Esophagus muscularis mucosa (tissue), 4 donors: ENCODE measurements at regions of chr11 and their contacts with region 1.

Region 1: DNA sequence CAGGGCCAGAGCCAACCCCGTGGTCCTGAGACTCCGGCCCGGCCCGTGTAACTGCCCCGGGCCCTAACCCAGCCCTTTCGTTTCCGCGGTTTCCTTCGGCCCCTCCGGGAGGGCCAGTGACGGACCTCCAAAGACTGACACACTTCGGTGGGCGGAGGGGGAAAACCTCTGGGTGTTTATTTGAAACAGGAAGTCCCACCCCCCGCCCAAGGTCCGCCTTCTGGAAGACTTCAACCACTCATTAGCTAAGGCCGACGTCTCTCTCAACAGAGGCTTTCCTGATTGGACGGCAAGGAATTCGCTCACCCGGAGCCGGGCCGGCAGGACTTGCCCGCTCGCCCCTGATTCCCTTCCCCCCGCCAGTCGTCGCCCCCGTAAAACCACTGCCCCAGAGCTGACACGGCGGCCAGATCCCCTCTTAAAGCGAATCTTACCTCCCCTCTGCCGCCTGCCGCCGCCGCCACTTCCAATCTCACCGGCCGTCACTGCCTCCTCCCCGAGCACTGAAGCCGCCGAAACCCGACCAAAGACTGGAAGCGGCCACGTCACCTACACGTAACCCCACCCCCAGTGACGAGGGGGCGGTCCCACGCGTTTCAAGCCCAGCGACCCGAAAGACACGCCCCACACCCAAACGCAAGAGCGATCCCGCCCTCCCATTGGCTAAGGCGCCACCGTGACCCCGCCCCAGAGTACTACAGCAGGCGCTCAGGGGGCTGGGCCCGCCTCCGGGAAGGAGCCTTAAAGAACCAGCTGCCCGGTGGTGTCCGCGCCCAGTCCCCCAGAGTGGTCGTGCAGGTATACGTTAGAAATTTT is at the start of gene STX5:
- DNase-seq: peak; percentile 100
- H3K4me3 ChIP-seq: peak within 1 kb of the TSS; percentile 89 to 98 (median 94)
- H3K27ac ChIP-seq: peak within 1 kb of the TSS; percentile 95 to 99 (median 97)
- H3K4me1 ChIP-seq: peaks cover 42 to 64% (median 51%) of the 10 kb centered on the region in 4 donors
- H3K27me3 ChIP-seq: no peaks in the 10 kb centered on the region
- CTCF ChIP-seq: no peak
- EP300 ChIP-seq: no peak
- POLR2A ChIP-seq: peak; percentile 81
- total RNA-seq, gene STX5: 22.8 to 31.6 (median 31.6) TPM

Region 2: DNA sequence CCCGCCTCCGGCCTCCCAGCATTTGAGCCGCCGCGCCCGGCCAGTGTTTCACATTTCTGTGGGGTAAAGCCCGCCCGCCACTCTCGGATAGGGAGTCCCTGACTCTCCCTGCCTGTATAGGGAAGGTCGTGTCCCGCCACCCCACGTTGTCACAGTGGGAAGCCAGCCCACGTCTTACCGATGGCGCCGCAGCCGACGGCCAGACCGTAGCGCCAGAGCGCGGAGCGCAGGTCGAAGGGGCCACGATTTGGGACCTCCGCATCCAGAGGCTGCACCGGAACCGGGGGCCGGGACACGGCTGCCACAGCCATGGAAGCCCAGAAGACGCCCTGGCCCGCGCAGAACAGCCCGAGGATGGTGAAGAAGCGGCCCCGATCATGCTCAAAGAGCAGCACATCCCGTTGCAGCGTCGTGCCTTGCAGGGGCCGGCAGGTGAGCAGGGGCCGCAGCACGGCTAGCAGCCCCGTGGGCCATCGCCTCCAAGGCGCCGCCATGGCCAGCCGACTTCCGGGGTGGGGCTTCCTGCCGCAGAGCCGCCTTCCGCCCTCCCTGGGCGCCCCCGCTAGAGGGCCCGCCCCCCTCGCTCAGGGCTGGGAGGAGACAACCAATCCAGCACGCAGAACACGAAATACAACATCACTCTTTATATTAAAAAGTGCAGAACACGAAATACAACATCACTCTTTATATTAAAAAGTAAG is 40.1 kb before region 1 on chr11 and contains the start of gene TMEM223:
- intact Hi-C with region 1: loop called (anchors 5 kb)
- DNase-seq: peak; percentile 95
- H3K4me3 ChIP-seq: peak within 1 kb of the TSS; percentile 69 to 87 (median 86)
- H3K27ac ChIP-seq: peak within 1 kb of the TSS; percentile 84 to 91 (median 86)
- H3K4me1 ChIP-seq: peaks cover 38 to 51% (median 49%) of the 10 kb centered on the region in 4 donors
- H3K27me3 ChIP-seq: no peaks in the 10 kb centered on the region
- CTCF ChIP-seq: peak in 2 of 3 experiments; percentile 9 to 35
- EP300 ChIP-seq: no peak
- POLR2A ChIP-seq: peak; percentile 42
- total RNA-seq, gene TMEM223: 13.7 to 17.9 (median 15.8) TPM

Region 3: DNA sequence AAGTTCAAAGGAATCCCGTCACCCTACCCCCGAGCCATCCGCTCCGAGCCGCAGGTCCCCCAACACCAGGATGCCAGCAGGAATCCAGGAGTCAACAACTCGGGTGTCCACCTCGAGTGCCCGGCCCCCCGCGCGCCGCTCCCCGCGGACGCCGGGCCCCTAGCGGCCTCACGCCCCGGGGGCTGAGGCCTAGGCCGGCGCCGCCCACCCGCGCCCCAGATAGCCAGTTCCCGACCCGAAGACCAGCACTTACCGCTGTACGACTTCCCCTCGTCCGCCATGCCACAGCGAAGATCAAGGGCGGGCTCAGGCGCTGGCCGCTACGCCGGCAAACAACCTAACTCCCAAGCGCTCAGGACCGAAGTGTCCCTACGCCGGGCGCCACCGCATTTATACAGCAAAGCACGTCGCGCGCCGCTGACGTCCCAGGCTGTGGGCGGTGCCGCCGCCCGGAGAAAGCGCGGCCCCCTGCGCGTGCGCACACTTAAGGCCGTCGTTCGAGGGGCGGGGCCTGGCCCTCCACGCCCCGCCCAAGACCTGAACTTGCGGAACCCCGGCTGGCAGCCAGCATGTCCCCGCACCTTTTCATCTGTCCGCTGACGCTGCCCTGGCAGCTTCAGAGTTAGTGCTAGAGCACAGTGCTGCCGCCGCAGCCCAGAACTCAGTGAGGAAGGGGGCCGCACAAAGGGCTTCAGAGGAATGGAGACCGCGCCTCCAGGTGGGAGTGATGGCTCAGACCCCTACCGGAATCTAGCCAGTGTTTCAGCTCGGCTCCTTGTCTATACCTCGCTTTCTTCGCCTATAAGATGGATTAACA is 26.4 kb before region 1 on chr11 and contains the start of gene NXF1:
- intact Hi-C with region 1: loop called (anchors 2 kb)
- DNase-seq: peak; percentile 99
- H3K4me3 ChIP-seq: peak within 1 kb of the TSS; percentile 83 to 99 (median 94)
- H3K27ac ChIP-seq: peak within 1 kb of the TSS; percentile 94 to 98 (median 95)
- H3K4me1 ChIP-seq: peaks cover 29 to 44% (median 32%) of the 10 kb centered on the region in 4 donors
- H3K27me3 ChIP-seq: no peaks in the 10 kb centered on the region
- CTCF ChIP-seq: peak in 2 of 3 experiments; percentile 3 to 37
- EP300 ChIP-seq: no peak
- POLR2A ChIP-seq: peak; percentile 99
- total RNA-seq, gene NXF1: 38.6 to 86.4 (median 48.4) TPM

Region 4: GRCh38 chr11:62896049-62896448 is 64.3 kb after region 1 on chr11:
- intact Hi-C with region 1: no loop called
- DNase-seq: no peak
- H3K4me3 ChIP-seq: no peak overlapping the region
- H3K27ac ChIP-seq: peak overlapping the region in 1 of 4 donors; percentile 54
- H3K4me1 ChIP-seq: peaks cover 0 to 6% (median under 1%) of the 10 kb centered on the region in 4 donors
- H3K27me3 ChIP-seq: no peaks in the 10 kb centered on the region
- CTCF ChIP-seq: no peak
- EP300 ChIP-seq: no peak
- POLR2A ChIP-seq: no peak

Region 5: GRCh38 chr11:63553741-63554151 is 722.0 kb after region 1 on chr11:
- intact Hi-C with region 1: no loop called
- DNase-seq: no peak
- H3K4me3 ChIP-seq: no peak overlapping the region
- H3K27ac ChIP-seq: no peak overlapping the region
- H3K4me1 ChIP-seq: no peaks in the 10 kb centered on the region
- H3K27me3 ChIP-seq: no peaks in the 10 kb centered on the region
- CTCF ChIP-seq: no peak
- EP300 ChIP-seq: no peak
- POLR2A ChIP-seq: no peak